Naive thymus-derived CD4-positive, alpha-beta T cell (primary cell): ENCODE measurements at regions of chr2 and their contacts with region 1.

Region 1: DNA sequence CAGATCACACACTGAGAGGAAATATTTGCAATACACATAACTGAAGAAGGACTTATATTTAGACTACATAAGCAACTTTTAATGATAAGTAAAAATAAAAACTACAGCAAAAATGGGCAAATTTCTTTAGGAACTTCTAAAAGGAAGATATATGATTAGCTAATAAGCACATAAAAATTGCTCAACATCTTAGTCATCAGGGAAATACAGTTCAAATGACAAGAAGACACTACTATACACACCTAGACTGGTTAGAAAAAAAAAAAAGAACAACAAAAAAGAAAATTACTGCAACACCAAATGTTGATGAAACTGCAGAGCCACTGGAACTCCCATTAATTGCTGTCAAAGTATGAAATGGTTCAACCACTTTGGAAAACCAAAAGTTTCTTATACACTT is 1247.5 kb upstream of the ACVR2A start:
- DNase-seq: no peak
- ATAC-seq: no peak
- H3K4me3 ChIP-seq: no peak overlapping the region
- H3K4me3 Mint-ChIP-seq: no peak overlapping the region
- H3K27ac ChIP-seq: no peak overlapping the region
- H3K27ac Mint-ChIP-seq: no peak overlapping the region
- H3K4me1 ChIP-seq: no peaks in the 10 kb centered on the region
- H3K4me1 Mint-ChIP-seq: no peaks in the 10 kb centered on the region
- H3K27me3 ChIP-seq: no peaks in the 10 kb centered on the region
- H3K27me3 Mint-ChIP-seq: no peaks in the 10 kb centered on the region

Region 2: GRCh38 chr2:145975406-145975805 is 621.9 kb before region 1 on chr2:
- CTCF ChIA-PET with region 1: no interaction called
- POLR2A ChIA-PET with region 1: no interaction called
- intact Hi-C with region 1: loop called in 1 of 2 experiments (anchors 5 kb)
- DNase-seq: no peak
- ATAC-seq: no peak
- H3K4me3 ChIP-seq: no peak overlapping the region
- H3K4me3 Mint-ChIP-seq: no peak overlapping the region
- H3K27ac ChIP-seq: no peak overlapping the region
- H3K27ac Mint-ChIP-seq: no peak overlapping the region
- H3K4me1 ChIP-seq: no peaks in the 10 kb centered on the region
- H3K4me1 Mint-ChIP-seq: no peaks in the 10 kb centered on the region
- H3K27me3 ChIP-seq: no peaks in the 10 kb centered on the region
- H3K27me3 Mint-ChIP-seq: no peaks in the 10 kb centered on the region